ENCODE measurements at regions of chr7 and their contacts with region 1.

Region 1: DNA sequence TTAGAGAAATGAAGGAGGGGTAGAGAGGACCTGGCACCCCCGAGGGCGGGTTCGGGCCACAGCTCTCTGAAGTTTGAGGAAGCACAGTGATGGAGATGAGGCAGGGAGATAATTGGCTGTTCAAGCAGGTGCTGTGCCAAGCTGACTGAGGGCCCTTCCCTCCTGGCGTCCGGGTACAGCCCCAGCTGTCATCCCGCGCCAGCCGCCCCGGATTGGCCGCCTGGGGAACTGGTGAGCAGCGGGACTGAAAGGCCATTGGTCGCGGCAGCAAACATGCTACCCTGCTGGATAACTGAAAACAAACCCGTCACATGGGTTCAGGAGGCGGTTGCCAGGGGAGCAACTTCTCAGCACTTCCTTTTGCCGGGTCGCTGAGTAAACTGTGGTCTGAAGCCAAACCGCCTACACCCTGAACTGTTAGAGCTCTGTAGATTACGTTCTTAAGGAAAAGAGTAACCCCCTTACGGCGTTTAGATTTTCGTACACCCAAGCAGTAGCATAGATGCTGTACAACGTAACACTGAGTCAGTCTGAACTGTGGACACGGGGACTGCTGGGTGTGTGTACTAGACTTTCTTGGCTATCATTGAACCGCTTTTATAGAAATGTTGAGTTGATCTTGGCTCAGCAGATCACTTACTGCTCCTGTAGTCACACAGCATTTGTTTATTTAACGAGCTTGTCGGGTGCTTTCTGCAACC is 1.3 kb downstream of the INSIG1 start:
- DNase-seq: peak; percentile 92
- ATAC-seq: peak; percentile 77
- H3K4me3 Mint-ChIP-seq: peak overlapping the region; percentile 96
- H3K27ac Mint-ChIP-seq: peak overlapping the region; percentile 97
- H3K4me1 Mint-ChIP-seq: peaks cover 38% of the 10 kb centered on the region
- H3K27me3 Mint-ChIP-seq: peaks cover 6% of the 10 kb centered on the region

Region 2: DNA sequence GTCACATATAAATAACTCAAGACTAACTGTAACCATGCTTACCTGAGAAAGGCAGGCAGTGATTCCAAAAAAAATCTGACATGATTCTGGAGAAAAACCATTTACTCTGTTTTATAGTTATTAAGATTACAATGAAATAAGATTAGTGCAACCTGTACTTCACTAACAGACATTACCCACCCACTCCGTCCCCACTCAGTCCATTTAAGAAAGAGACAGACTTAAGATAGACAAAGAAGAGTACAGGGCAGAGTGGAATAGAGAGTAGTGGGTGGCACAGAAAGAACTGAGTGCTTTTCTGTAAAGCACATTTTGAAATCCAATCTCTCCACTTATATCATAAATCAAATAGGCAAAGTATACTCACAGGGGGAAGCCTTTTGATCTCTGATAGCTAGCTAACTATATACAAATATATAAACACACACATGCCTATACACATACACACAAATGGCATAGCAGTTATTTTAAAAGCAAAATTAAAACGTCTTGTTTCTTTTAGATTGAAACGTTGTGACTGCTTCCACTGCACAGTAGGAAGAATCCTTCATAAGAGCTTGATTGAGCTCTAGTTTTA is 307.9 kb before region 1 on chr7:
- POLR2A ChIA-PET with region 1: no interaction called
- DNase-seq: no peak
- ATAC-seq: no peak
- H3K4me3 Mint-ChIP-seq: no peak overlapping the region
- H3K27ac Mint-ChIP-seq: no peak overlapping the region
- H3K4me1 Mint-ChIP-seq: peaks cover 6% of the 10 kb centered on the region
- H3K27me3 Mint-ChIP-seq: no peaks in the 10 kb centered on the region

Region 3: GRCh38 chr7:155003376-155004214 is 295.4 kb before region 1 on chr7:
- POLR2A ChIA-PET with region 1: interaction called, 15 read pairs
- DNase-seq: no peak
- ATAC-seq: peak; percentile 77
- H3K4me3 Mint-ChIP-seq: peak overlapping the region; percentile 92
- H3K27ac Mint-ChIP-seq: peak overlapping the region; percentile 92
- H3K4me1 Mint-ChIP-seq: peaks cover 12% of the 10 kb centered on the region
- H3K27me3 Mint-ChIP-seq: no peaks in the 10 kb centered on the region

Region 4: DNA sequence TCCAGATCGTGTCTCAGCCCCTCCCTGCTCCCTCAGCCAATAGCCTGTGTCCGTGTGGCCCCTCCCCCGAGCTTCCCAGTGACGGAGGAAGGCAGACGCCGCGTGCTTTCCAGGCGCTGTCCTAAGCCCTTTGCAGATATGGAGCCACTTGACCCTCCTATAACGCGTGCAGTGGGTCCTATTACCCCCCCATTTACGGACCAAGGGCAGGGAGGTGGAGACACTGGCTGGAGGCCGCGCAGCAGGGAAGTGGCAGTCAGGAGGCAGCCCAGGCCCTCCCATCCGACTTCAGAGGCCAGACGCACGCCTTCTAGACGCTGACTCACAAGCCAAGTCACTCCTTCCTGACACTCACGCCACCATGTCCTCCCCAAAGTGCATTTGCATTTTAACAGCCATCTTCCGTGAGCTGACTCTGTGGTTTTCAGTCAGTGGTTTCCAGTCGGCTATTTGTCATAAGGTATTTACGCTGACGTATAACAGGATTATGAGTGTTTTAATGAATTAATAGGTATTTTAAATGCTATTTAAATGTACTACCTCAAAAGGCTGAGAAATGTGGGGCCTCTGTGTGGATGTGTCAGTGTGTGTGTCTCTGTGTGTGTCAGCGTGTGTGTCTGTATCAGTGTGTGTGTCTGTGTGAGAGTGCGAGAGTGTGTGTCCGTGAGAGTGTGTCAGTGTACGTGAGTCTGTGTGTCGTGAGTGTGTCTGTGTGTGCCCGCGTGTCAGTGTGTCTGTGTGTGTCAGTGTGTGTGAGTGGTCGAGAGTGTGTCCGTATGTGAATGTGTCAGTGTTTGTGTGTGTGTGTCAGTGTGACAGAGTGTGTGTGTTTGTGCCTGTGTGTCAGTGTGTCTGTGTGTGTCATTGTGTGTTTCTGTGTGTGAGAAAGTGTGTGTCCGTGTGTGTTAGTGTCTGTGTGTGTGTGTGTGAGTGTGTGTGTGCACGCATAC is 93.3 kb before region 1 on chr7:
- POLR2A ChIA-PET with region 1: interaction called, 88 read pairs
- DNase-seq: peak; percentile 80
- ATAC-seq: peak; percentile 96
- H3K4me3 Mint-ChIP-seq: peak overlapping the region; percentile 82
- H3K27ac Mint-ChIP-seq: peak overlapping the region; percentile 96
- H3K4me1 Mint-ChIP-seq: peaks cover 19% of the 10 kb centered on the region
- H3K27me3 Mint-ChIP-seq: peaks cover 2% of the 10 kb centered on the region

Region 5: GRCh38 chr7:155287304-155287935 is 11.6 kb before region 1 on chr7:
- POLR2A ChIA-PET with region 1: interaction called, 21 read pairs
- DNase-seq: no peak
- ATAC-seq: no peak
- H3K4me3 Mint-ChIP-seq: no peak overlapping the region
- H3K27ac Mint-ChIP-seq: no peak overlapping the region
- H3K4me1 Mint-ChIP-seq: peaks cover 37% of the 10 kb centered on the region
- H3K27me3 Mint-ChIP-seq: peaks cover 9% of the 10 kb centered on the region

Region 6: DNA sequence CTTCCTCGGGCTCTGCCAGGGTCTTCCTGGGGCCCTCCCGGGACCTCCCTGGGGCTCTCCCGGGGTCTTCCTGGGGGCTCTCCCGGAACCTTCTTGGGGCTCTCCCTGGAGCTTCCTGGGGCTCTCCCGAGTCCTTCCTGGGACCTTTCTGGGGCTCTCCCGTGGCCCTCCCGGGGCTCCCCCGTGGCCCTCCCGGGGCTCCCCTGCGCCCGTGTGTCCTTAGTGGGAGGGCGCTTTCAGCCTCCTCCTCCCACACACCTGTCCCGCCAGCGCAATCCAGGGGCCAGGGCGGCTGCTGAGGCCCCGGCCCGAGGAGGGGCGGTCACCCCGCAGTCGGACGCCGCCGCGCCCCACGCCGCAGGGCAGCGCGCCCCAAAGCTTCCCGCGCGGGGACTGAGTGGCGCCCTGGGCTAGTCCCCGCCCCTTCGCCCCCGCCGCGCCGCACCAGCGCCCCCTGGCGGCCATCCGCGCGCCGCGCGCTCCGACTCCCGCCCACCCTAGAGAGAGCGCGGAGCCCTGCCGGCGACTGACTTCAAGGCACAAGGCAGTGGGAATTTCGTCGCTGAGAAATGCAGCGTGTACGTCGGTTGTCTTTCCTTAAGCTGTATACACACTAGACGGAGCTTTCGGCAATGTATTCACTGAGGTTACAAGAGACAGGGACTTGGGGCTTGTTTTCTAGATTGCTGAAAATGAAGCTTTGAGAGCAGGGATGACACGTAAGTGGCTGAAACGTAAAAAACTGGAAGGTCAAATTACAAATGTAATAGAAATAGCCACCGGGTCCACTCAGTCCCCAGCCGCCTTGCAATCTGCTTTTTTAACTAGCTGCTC is 45.8 kb after region 1 on chr7:
- POLR2A ChIA-PET with region 1: interaction called, 19 read pairs
- DNase-seq: peak; percentile 94
- ATAC-seq: peak; percentile 98
- H3K4me3 Mint-ChIP-seq: peak overlapping the region; percentile 68
- H3K27ac Mint-ChIP-seq: no peak overlapping the region
- H3K4me1 Mint-ChIP-seq: peaks cover 5% of the 10 kb centered on the region
- H3K27me3 Mint-ChIP-seq: peaks cover 20% of the 10 kb centered on the region

Measured in activated naive CD8-positive, alpha-beta T cell treated with anti-CD3 and anti-CD28 coated beads, Interleukin-2, amount 10 ng/mL, durations not matched to agents 7 days and 5 days (primary cell).